ENCODE measurements at regions of chr13 and their contacts with region 1.

Region 1: DNA sequence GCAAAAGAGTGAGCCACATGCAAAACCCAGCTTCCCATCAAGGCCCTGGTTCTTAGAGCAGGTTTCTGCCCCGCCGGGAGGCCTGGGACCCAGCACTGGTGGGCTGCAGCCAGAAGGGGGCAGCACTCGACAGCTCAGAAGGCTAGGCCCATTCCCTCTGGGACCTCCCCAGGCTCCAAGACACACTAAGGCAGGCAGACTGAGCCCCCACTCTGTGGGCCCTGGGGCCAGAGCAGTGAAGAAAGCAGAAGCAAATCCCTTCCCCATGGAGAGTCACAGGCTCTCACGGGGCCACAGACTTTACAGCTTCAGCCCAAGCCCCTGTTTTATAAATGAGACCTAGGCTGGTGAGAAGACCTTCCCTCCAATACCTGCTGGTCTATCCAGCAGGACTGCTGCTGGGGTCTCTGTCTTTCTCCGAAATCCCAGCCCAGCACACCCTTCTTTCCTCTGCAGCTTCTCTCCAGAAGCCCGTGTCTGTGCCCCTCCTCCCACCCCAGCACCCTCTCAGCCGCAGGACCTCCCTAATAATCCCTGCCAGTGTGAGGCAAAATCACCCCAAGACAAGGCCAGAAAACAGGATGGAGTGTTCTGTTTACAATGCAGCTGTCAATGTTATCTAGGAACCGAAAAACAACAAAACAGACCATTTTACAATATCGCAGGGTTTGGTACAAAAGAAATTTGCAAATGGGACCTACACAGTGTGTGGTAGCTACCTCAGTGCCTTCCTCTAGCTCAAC is 109.3 kb downstream of the ABCC4 start:
- DNase-seq: peak; percentile 82 to 93 (median 91)
- ATAC-seq: peak; percentile 92 to 95
- H3K4me3 ChIP-seq: no peak overlapping the region
- H3K27ac ChIP-seq: no peak overlapping the region
- H3K4me1 ChIP-seq: no peaks in the 10 kb centered on the region
- H3K27me3 ChIP-seq: no peaks in the 10 kb centered on the region

Region 2: GRCh38 chr13:95301183-95301967 is 109.4 kb after region 1 on chr13 and contains the start of gene ABCC4:
- intact Hi-C with region 1: loop called in 1 of 4 experiments (anchors 10 kb)
- DNase-seq: peak; percentile 76 to 90 (median 88)
- ATAC-seq: peak; percentile 94 to 95
- H3K4me3 ChIP-seq: peak within 1 kb of the TSS; percentile 59
- H3K27ac ChIP-seq: peak within 1 kb of the TSS; percentile 19
- H3K4me1 ChIP-seq: no peaks in the 10 kb centered on the region
- H3K27me3 ChIP-seq: no peaks in the 10 kb centered on the region
- total RNA-seq, gene ABCC4: 3.5 to 5.8 (median 4.7) TPM

Region 3: DNA sequence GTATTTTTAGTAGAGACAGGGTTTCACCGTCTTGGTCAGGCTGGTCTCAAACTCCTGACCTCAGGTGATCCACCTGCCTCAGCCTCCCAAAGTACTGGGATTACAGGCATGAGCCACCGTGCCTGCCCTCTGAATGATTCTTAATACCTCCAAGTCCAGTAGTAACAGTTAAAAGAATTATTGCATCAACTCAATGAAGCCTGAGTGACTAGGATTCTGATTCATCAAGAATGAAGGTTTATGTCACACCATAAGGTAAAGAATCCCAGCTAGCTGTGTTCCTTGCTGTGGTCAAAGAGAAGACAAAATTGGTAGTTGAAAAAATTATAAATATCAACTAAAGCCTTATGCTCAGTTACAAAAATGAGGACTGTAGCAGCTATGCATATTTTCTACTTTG is 190.4 kb after region 1 on chr13:
- intact Hi-C with region 1: loop called (anchors 5 kb)
- DNase-seq: no peak
- ATAC-seq: no peak
- H3K4me3 ChIP-seq: no peak overlapping the region
- H3K27ac ChIP-seq: no peak overlapping the region
- H3K4me1 ChIP-seq: peaks cover 2% of the 10 kb centered on the region
- H3K27me3 ChIP-seq: no peaks in the 10 kb centered on the region

Region 4: DNA sequence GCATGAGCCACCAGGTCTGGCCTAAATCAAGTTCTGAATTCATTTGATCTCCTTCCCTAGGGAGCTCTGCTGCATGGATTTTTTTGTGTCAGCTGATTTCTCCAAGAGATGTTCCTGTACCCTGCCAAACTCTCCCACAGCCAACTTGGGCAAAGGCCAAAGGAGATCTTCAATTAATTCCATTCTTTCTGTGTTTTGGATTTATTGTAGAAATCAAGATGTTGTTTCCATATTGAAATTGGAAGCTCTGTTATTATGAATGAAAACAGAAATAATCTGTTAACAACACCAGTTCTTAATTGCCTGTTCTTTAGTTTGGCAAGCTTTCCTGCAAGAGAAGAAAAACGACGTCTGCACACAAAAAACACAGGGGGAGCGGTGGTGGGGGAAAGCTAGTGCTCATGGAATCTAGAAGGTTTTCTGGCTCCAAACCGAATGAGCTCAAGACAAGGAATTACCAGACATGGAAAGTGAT is 195.8 kb after region 1 on chr13:
- intact Hi-C with region 1: loop called (anchors 5 kb)
- DNase-seq: peak; percentile 37 to 70 (median 63)
- ATAC-seq: peak; percentile 68 to 78
- H3K4me3 ChIP-seq: no peak overlapping the region
- H3K27ac ChIP-seq: no peak overlapping the region
- H3K4me1 ChIP-seq: no peaks in the 10 kb centered on the region
- H3K27me3 ChIP-seq: no peaks in the 10 kb centered on the region

Region 5: DNA sequence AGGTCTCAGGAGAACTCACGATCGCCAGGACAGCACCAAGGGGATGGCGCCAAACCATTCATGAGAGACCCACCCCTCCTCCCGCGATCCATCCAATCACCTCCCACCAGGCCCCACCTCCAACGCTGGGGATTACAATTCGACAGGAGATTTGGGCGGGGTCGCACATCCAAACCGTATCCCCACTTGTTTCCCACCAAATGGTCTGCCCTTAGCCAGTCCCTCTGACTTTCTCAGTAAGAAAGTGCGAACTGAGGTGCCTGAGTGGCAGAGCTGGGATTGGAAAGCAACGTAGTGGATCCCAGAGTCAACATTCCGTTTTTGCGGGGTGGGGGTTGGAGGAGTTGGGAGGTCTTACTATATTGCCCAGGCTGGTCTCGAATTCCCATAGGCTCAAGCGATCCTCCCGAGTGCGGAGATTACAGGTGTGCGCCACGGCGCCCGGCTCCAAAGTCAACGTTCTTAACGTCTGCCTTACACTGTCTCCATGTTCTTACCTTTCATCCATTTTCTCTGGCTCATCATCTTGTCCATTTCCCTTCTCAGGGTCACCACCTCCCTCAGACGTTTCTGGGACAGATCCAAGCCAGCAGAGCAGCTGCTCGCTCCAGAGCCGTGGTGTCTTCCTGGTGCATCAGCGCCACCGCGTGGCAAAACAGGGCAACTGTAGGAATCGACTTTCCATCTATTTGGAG is 212.0 kb after region 1 on chr13:
- intact Hi-C with region 1: loop called (anchors 1 to 5 kb)
- DNase-seq: peak; percentile 79 to 91 (median 90)
- ATAC-seq: peak; percentile 90 to 94
- H3K4me3 ChIP-seq: peak overlapping the region; percentile 14
- H3K27ac ChIP-seq: no peak overlapping the region
- H3K4me1 ChIP-seq: no peaks in the 10 kb centered on the region
- H3K27me3 ChIP-seq: no peaks in the 10 kb centered on the region

Measured in right cardiac atrium (tissue), 5 donors.